ENCODE measurements at regions of chr17 and their contacts with region 1.

Region 1: DNA sequence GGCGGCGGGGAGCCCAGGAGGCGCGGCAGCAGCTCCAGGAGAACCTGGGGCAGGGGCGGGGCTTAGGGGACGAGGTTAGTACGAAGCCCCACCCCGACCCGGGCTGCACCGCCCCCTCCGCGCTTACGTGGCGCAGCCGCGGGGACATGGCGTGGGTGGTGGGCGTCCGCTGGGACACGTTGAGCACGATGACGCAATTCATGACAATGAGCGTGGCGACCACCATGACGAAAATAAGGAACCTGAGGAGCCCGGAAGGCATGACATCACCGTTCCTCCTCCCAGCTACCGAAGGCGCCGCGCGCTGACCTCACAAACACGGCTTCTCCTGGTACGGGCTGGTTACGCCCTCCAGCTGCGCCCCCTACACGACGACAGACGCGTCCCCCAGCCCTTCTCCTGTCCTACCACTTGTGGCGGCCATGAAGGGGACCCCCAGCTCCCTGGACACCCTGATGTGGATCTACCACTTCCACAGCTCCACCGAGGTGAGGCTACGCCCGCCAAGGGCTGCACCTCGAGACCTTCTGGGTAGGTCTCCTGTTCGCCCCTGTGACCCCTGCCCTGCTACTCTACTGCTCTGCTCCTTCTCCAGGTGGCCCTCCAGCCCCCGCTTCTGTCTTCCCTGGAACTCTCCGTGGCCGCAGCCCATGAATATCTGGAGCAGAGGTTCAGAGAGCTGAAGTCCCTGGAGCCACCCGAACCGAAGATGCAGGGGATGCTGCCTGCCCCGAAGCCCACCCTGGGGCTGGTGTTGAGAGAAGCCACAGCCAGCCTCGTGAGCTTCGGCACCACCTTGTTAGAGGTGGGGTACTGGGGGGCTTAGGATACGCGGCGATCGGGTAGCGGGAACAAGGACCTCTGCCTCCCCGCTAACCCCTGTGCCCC is at the start of gene C17orf107:
- DNase-seq: peak; percentile 95
- H3K4me3 ChIP-seq: peak within 1 kb of the TSS; percentile 73
- H3K27ac ChIP-seq: no peak within 1 kb of the TSS
- H3K4me1 ChIP-seq: 0 out of 2 replicates have a peak, but pooled peaks cover 5% of the 10 kb centered on the region
- H3K27me3 ChIP-seq: no peaks in the 10 kb centered on the region
- total RNA-seq, gene C17orf107: 3.8 and 8.8 TPM in 2 replicates

Region 2: DNA sequence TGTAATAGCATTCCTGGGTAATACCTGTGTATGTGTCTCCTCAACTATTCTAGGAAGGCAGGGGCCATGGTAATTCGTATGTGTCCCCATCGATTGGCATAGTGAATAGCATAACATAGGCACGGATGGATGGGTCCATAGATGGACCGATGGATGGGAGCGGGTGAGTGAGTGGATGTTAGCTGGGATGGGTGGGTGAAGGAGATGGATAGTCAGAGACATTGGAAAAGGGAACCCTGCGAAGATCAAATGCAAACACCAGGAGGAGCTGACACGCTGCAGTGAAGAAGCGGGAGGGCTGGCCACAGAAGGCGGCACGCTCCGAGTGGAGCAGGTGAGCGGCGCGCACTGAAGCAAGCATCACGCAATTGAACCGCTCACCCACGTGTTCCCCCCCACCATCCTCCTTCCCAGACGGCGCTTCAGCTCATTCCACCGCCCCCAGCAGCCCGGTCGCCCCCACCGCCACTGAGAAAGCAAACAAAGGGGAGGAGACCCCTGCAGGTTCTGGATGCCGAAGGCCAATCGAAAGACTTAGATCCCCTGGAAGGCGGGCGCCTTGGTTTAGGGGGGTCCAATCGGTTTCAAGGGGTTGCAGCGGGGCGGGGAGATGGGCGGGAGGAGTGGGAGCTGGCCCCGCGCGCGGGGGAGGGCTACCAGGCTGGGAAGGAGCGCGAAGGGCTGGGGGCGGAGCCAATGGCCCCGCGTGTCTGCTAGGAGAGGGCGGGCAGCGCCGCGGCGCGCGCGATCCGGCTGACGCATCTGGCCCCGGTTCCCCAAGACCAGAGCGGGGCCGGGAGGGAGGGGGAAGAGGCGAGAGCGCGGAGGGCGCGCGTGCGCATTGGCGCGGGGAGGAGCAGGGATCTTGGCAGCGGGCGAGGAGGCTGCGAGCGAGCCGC is 189.5 kb before region 1 on chr17 and contains the start of gene ARRB2:
- in situ Hi-C with region 1: loop called (anchors 10 kb)
- DNase-seq: peak; percentile 98
- H3K4me3 ChIP-seq: peak within 1 kb of the TSS; percentile 80
- H3K27ac ChIP-seq: peak within 1 kb of the TSS; percentile 46
- H3K4me1 ChIP-seq: no peaks in the 10 kb centered on the region
- H3K27me3 ChIP-seq: no peaks in the 10 kb centered on the region
- total RNA-seq, gene ARRB2: 4.1 and 4.8 TPM in 2 replicates

Region 3: DNA sequence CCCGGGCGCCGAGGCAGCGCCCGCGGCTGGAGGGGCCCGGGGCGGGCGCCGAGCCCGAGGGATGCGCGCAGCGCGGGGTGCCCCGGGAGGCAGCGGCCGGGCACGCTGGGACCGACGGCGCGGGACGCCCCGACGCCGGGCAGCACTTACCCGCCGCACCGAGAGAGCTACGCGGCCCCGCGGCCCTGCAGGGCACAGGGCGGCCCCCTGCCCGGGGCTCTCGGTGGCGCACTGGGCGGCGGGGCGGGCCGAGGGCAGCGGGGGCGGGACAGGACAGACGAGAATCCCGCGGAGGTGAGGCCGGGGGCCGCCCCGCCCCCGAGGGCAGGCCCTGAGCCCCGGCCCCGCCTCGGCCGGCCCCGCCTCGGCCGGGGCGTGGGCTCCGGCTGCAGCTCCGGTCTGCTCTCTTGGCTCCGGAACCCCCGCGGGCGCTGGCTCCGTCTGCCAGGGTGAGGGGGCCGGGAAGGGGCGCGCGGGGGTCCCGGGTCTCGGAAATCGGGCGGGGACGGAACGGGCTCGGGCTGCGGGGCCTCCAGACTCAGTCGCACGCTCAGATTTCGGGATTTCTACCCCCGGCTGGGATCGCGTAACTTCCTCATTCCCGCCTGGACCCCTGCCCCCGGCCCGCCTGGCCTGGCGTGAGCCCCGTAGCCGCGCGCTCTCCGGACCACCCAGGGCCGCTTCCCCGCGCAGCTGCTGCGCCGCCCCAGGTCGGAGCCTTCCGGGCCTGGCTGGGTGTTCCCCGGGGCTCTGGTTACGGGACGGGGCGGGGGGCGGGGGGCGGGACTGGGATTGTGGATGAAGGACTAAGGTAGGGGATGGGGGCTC is 92.6 kb before region 1 on chr17 and contains the start of gene PLD2:
- in situ Hi-C with region 1: no loop called
- DNase-seq: peak; percentile 95
- H3K4me3 ChIP-seq: peak within 1 kb of the TSS; percentile 88
- H3K27ac ChIP-seq: no peak within 1 kb of the TSS
- H3K4me1 ChIP-seq: peaks cover 4% of the 10 kb centered on the region; the same call in 1 of the 2 replicates
- H3K27me3 ChIP-seq: no peaks in the 10 kb centered on the region
- total RNA-seq, gene PLD2: 20.9 and 22.0 TPM in 2 replicates

Region 4: DNA sequence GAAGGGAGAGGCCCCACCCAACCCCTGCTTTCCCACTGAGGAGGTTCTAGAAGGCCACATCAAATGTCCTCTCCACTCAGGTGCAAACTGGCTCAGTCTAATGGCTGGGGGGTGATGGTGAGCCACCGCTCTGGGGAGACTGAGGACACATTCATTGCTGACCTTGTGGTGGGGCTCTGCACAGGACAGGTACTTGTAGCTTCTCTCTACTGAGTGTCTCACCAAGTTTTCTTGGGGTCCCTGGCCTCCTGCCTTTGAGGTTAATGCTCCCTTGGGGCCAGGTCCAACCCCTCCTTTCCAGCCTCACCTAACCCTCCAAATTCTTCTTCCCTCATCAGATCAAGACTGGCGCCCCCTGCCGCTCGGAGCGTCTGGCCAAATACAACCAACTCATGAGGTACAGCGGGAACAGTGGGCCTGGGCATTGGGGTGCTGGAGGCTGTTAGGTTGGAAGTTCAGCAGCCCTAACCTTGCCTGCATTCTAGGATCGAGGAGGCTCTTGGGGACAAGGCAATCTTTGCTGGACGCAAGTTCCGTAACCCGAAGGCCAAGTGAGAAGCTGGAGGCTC is 57.0 kb after region 1 on chr17:
- in situ Hi-C with region 1: no loop called
- DNase-seq: no peak
- H3K4me3 ChIP-seq: no peak overlapping the region
- H3K27ac ChIP-seq: no peak overlapping the region
- H3K4me1 ChIP-seq: peaks cover 13% of the 10 kb centered on the region
- H3K27me3 ChIP-seq: no peaks in the 10 kb centered on the region